ENCODE measurements at regions of chr15 and their contacts with region 1.

Region 1: GRCh38 chr15:24985224-24985623 is 30.4 kb downstream of the SNRPN start:
- DNase-seq: no peak
- ATAC-seq: no peak
- H3K4me3 ChIP-seq: no peak overlapping the region
- H3K4me3 Mint-ChIP-seq: no peak overlapping the region
- H3K27ac ChIP-seq: no peak overlapping the region
- H3K27ac Mint-ChIP-seq: no peak overlapping the region
- H3K4me1 ChIP-seq: no peaks in the 10 kb centered on the region
- H3K4me1 Mint-ChIP-seq: no peaks in the 10 kb centered on the region
- H3K27me3 ChIP-seq: no peaks in the 10 kb centered on the region
- H3K27me3 Mint-ChIP-seq: no peaks in the 10 kb centered on the region

Region 2: DNA sequence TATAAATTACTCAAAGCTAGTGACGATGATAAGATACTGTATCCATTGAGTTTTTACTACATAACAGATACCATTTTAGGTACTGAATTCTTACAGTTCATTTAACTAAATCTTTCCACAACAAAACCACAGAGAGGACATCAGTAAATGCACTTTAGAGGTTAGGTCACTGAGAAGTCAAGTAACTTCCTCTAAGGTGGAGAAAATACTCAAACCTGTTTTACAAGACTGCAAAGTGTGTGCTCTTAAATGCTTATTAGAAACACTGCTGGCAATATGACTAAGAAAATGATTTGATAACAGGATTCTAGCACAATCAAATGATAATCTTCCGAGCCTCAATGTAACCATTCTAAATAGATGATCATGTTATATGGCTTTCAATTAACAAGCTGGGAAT is 354.2 kb after region 1 on chr15:
- CTCF ChIA-PET with region 1: no interaction called
- POLR2A ChIA-PET with region 1: no interaction called
- DNase-seq: no peak
- ATAC-seq: no peak
- H3K4me3 ChIP-seq: no peak overlapping the region
- H3K4me3 Mint-ChIP-seq: no peak overlapping the region
- H3K27ac ChIP-seq: no peak overlapping the region
- H3K27ac Mint-ChIP-seq: no peak overlapping the region
- H3K4me1 ChIP-seq: no peaks in the 10 kb centered on the region
- H3K4me1 Mint-ChIP-seq: peaks cover 0 to 3% (median 0%) of the 10 kb centered on the region in 3 donors
- H3K27me3 ChIP-seq: no peaks in the 10 kb centered on the region
- H3K27me3 Mint-ChIP-seq: no peaks in the 10 kb centered on the region

Region 3: DNA sequence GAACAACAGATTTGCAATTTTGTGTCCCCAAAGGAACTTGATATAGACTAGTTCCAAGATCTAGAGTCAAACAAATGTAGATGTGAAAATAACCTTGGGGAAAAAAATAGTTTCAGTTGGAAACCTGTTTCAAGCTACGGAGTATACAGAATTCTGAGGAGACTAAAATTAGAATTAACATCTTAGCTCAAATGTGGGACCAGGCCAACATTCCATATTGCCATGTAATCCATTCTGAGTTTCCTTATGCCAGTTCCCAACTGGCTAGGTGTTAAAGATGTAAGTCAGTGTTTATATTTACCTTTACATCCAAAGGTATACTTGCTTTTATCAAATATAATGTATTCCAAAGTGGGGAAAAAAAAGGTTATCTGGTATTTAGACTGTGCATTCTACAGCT is 377.3 kb after region 1 on chr15:
- CTCF ChIA-PET with region 1: no interaction called
- POLR2A ChIA-PET with region 1: interaction called in 1 of 2 experiments, 13 read pairs
- DNase-seq: no peak
- ATAC-seq: no peak
- H3K4me3 ChIP-seq: no peak overlapping the region
- H3K4me3 Mint-ChIP-seq: no peak overlapping the region
- H3K27ac ChIP-seq: no peak overlapping the region
- H3K27ac Mint-ChIP-seq: no peak overlapping the region
- H3K4me1 ChIP-seq: no peaks in the 10 kb centered on the region
- H3K4me1 Mint-ChIP-seq: peaks cover 16 to 21% (median 18%) of the 10 kb centered on the region in 3 donors
- H3K27me3 ChIP-seq: no peaks in the 10 kb centered on the region
- H3K27me3 Mint-ChIP-seq: no peaks in the 10 kb centered on the region

Region 4: GRCh38 chr15:25378501-25378901 is 393.3 kb after region 1 on chr15:
- CTCF ChIA-PET with region 1: no interaction called
- POLR2A ChIA-PET with region 1: interaction called in 1 of 2 experiments, 10 read pairs
- DNase-seq: no peak
- ATAC-seq: no peak
- H3K4me3 ChIP-seq: no peak overlapping the region
- H3K4me3 Mint-ChIP-seq: no peak overlapping the region
- H3K27ac ChIP-seq: no peak overlapping the region
- H3K27ac Mint-ChIP-seq: no peak overlapping the region
- H3K4me1 ChIP-seq: no peaks in the 10 kb centered on the region
- H3K4me1 Mint-ChIP-seq: peaks cover 35 to 42% (median 41%) of the 10 kb centered on the region in 3 donors
- H3K27me3 ChIP-seq: no peaks in the 10 kb centered on the region
- H3K27me3 Mint-ChIP-seq: no peaks in the 10 kb centered on the region